ENCODE measurements at regions of chr22 and their contacts with region 1.

Region 1: GRCh38 chr22:40024201-40025061 is 29.7 kb downstream of the FAM83F start:
- DNase-seq: peak; percentile 85
- H3K4me3 ChIP-seq: no peak overlapping the region
- H3K27ac ChIP-seq: no peak overlapping the region
- H3K4me1 ChIP-seq: peaks cover 6% of the 10 kb centered on the region
- H3K27me3 ChIP-seq: no peaks in the 10 kb centered on the region
- CTCF ChIP-seq: peak; percentile 80

Region 2: GRCh38 chr22:39622881-39623367 is 401.5 kb before region 1 on chr22:
- intact Hi-C with region 1: loop called (anchors 5 kb)
- DNase-seq: peak; percentile 70
- H3K4me3 ChIP-seq: no peak overlapping the region
- H3K27ac ChIP-seq: no peak overlapping the region
- H3K4me1 ChIP-seq: no peaks in the 10 kb centered on the region
- H3K27me3 ChIP-seq: no peaks in the 10 kb centered on the region
- CTCF ChIP-seq: peak; percentile 63

Region 3: GRCh38 chr22:39932918-39933649 is 91.3 kb before region 1 on chr22:
- intact Hi-C with region 1: loop called (anchors 5 kb)
- DNase-seq: peak; percentile 60
- H3K4me3 ChIP-seq: no peak overlapping the region
- H3K27ac ChIP-seq: no peak overlapping the region
- H3K4me1 ChIP-seq: no peaks in the 10 kb centered on the region
- H3K27me3 ChIP-seq: no peaks in the 10 kb centered on the region
- CTCF ChIP-seq: peak; percentile 69

Measured in colonic mucosa (tissue), 4 donors.